ENCODE measurements at regions of chr15 and their contacts with region 1.

Region 1: GRCh38 chr15:31488426-31489204 is 162.0 kb downstream of the KLF13 start:
- DNase-seq: peak in 6 of 9 experiments; percentile 29 to 88 (median 56)
- ATAC-seq: peak; percentile 59
- H3K4me3 ChIP-seq: no peak overlapping the region
- H3K4me3 Mint-ChIP-seq: no peak overlapping the region
- H3K27ac ChIP-seq: no peak overlapping the region
- H3K27ac Mint-ChIP-seq: no peak overlapping the region
- H3K4me1 ChIP-seq: peaks cover 30% of the 10 kb centered on the region
- H3K4me1 Mint-ChIP-seq: peaks cover 39% of the 10 kb centered on the region
- H3K27me3 ChIP-seq: no peaks in the 10 kb centered on the region
- H3K27me3 Mint-ChIP-seq: no peaks in the 10 kb centered on the region
- CTCF ChIP-seq: peak; percentile 88

Region 2: DNA sequence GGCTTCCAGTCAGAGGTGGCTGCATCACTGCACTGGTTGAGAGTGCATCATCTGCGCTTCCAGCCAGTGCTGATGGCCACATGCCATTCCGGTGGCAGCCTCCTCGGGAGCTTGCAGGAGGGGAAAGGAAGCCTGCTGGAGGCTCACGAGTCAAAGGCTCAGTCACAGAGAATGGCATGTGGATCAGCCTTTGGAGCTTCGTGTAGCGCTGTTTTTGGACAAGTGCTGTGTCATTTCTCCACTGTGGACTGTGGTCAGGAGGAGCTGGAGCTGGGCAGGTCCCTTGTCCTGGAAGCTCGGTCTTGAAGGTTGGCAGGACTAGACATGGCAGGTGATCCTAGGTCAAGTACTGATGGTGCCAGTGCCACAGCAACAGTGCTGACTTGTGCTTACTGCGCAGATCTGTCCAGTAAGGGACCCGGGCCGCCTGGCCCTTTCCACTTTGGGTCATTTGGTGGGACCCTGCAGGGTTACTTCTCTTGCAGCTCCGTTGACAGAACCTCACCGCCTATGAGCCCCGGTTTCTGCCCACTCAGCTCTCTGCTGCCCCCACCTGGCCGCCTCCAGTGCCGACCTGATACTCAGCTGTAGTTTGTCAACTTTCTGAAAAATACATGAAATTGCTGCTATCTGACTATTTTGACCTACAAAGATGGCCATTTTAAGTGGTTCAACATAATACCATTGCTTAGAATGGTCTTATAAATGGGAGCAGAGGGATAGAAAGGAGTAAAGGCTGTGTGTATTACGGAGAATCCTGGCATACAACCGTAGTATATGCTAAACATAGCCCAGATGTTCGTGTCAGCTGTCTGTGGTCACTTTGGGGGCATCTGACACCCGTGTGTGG is 359.5 kb before region 1 on chr15:
- CTCF ChIA-PET with region 1: interaction called, 14 read pairs
- POLR2A ChIA-PET with region 1: no interaction called
- intact Hi-C with region 1: no loop called
- DNase-seq: peak; percentile 59 to 89 (median 74)
- ATAC-seq: peak; percentile 92
- H3K4me3 ChIP-seq: no peak overlapping the region
- H3K4me3 Mint-ChIP-seq: no peak overlapping the region
- H3K27ac ChIP-seq: no peak overlapping the region
- H3K27ac Mint-ChIP-seq: no peak overlapping the region
- H3K4me1 ChIP-seq: no peaks in the 10 kb centered on the region
- H3K4me1 Mint-ChIP-seq: peaks cover 5% of the 10 kb centered on the region
- H3K27me3 ChIP-seq: no peaks in the 10 kb centered on the region
- H3K27me3 Mint-ChIP-seq: no peaks in the 10 kb centered on the region
- CTCF ChIP-seq: peak; percentile 86

Region 3: DNA sequence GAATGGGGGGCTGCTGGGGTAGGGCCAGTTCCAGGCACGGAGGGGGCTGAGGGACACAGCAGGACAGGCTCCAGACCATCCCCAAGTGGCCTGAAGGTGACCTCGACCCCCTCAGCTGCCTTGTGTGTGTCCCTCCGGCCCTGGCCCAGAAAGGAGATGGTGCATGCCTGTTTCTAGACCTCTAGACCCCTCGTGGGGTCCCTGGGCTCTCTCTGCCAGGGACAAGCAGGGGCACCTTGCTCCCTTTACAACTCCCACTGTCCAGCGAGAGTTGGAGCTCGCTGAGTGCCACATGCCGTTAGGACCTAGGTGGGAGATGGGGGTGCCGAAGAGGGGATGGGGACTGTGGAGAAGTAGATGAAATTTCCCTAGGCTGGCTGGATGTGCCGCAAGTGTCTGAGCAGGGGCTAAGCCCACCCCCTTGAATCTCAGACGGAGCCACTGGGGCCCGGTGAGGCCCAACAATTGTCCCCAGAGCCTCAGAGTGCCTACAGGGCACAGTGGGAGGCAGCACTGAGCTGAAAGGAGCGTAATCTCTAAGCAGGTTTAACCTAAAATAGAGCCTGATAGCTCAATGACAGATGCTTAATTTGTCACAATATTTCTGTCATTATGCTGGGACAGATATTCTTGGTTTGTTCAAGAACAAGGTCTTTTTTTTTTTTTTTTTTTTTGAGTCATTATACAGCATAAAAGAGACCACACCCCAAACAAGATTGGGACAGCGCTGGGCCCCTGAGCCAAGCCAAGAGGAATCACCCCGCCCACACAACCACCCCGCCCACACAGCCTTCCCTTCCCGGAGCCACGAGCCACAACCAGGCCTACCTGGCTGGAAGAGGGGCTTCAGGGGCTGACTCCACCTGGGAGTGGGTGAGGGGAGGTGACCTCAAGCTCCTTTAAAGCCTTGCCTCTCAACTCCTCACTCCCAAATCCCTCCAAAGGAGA is 185.6 kb before region 1 on chr15:
- CTCF ChIA-PET with region 1: interaction called, 18 read pairs
- POLR2A ChIA-PET with region 1: interaction called, 4 read pairs
- intact Hi-C with region 1: loop called (anchors 1 to 2 kb)
- DNase-seq: peak in 4 of 9 experiments; percentile 13 to 52 (median 45)
- ATAC-seq: peak; percentile 69
- H3K4me3 ChIP-seq: no peak overlapping the region
- H3K4me3 Mint-ChIP-seq: no peak overlapping the region
- H3K27ac ChIP-seq: no peak overlapping the region
- H3K27ac Mint-ChIP-seq: no peak overlapping the region
- H3K4me1 ChIP-seq: peaks cover 26% of the 10 kb centered on the region
- H3K4me1 Mint-ChIP-seq: peaks cover 35% of the 10 kb centered on the region
- H3K27me3 ChIP-seq: peaks cover 0 to 3% of the 10 kb centered on the region in 2 experiments
- H3K27me3 Mint-ChIP-seq: no peaks in the 10 kb centered on the region
- CTCF ChIP-seq: no peak

Region 4: GRCh38 chr15:31338879-31339557 is 149.6 kb before region 1 on chr15:
- CTCF ChIA-PET with region 1: interaction called, 24 read pairs
- POLR2A ChIA-PET with region 1: interaction called, 4 read pairs
- intact Hi-C with region 1: no loop called
- DNase-seq: peak in 2 of 9 experiments; percentile 44 to 63
- ATAC-seq: no peak
- H3K4me3 ChIP-seq: peak overlapping the region in 1 of 2 experiments; percentile 12
- H3K4me3 Mint-ChIP-seq: peak overlapping the region; percentile 45
- H3K27ac ChIP-seq: peak overlapping the region; percentile 36 to 72
- H3K27ac Mint-ChIP-seq: peak overlapping the region; percentile 86
- H3K4me1 ChIP-seq: peaks cover 99% of the 10 kb centered on the region
- H3K4me1 Mint-ChIP-seq: peaks cover 99% of the 10 kb centered on the region
- H3K27me3 ChIP-seq: no peaks in the 10 kb centered on the region
- H3K27me3 Mint-ChIP-seq: no peaks in the 10 kb centered on the region
- CTCF ChIP-seq: no peak

Region 5: DNA sequence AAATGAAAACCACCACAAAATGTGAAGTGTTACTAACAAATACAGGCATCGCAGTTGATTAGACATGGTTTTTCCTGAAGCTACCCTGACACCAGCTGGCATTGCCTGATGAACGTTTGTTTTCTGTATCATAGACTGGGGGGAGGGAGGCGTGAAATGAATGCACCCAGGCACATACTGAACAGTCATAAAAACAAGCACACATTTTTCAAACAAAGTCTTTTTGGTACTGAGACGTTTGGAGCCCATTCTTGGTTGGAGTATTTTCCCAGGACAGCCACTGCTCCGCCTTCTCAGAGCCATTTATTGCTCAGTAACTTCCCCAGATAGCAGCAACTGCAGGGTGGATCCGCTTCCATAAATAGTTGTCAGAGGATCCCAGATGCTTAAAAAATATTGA is 109.6 kb before region 1 on chr15:
- CTCF ChIA-PET with region 1: interaction called, 23 read pairs
- POLR2A ChIA-PET with region 1: interaction called, 4 read pairs
- intact Hi-C with region 1: no loop called
- DNase-seq: peak in 3 of 9 experiments; percentile 36 to 56 (median 40)
- ATAC-seq: peak; percentile 32
- H3K4me3 ChIP-seq: no peak overlapping the region
- H3K4me3 Mint-ChIP-seq: no peak overlapping the region
- H3K27ac ChIP-seq: peak overlapping the region in 1 of 2 experiments; percentile 64
- H3K27ac Mint-ChIP-seq: peak overlapping the region; percentile 93
- H3K4me1 ChIP-seq: peaks cover 49% of the 10 kb centered on the region
- H3K4me1 Mint-ChIP-seq: peaks cover 70% of the 10 kb centered on the region
- H3K27me3 ChIP-seq: no peaks in the 10 kb centered on the region
- H3K27me3 Mint-ChIP-seq: no peaks in the 10 kb centered on the region
- CTCF ChIP-seq: no peak

Region 6: DNA sequence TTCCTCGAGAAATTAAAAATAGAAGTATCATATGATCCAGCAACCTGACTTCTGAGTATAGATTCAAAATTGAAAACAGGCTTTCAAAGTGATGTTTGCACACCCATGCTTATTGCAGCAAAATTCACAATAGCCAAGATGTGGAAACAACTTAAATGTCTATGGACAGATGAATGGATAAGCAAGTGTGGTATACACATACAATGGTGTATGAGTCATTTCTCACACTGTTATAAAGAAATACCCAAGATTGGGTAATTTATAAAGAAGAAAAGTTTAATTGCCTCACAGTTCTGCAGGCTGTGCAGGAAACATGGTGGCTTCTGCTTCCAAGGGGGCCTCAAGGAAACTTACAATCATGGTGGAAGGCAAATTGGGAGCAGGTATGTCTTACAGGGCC is 61.2 kb before region 1 on chr15:
- CTCF ChIA-PET with region 1: interaction called, 12 read pairs
- POLR2A ChIA-PET with region 1: no interaction called
- intact Hi-C with region 1: no loop called
- DNase-seq: no peak
- ATAC-seq: no peak
- H3K4me3 ChIP-seq: no peak overlapping the region
- H3K4me3 Mint-ChIP-seq: no peak overlapping the region
- H3K27ac ChIP-seq: no peak overlapping the region
- H3K27ac Mint-ChIP-seq: no peak overlapping the region
- H3K4me1 ChIP-seq: no peaks in the 10 kb centered on the region
- H3K4me1 Mint-ChIP-seq: peaks cover 16% of the 10 kb centered on the region
- H3K27me3 ChIP-seq: no peaks in the 10 kb centered on the region
- H3K27me3 Mint-ChIP-seq: no peaks in the 10 kb centered on the region
- CTCF ChIP-seq: no peak

Region 7: GRCh38 chr15:31465083-31465955 is 23.3 kb before region 1 on chr15:
- CTCF ChIA-PET with region 1: interaction called, 45 read pairs
- POLR2A ChIA-PET with region 1: no interaction called
- intact Hi-C with region 1: no loop called
- DNase-seq: no peak
- ATAC-seq: no peak
- H3K4me3 ChIP-seq: no peak overlapping the region
- H3K4me3 Mint-ChIP-seq: no peak overlapping the region
- H3K27ac ChIP-seq: no peak overlapping the region
- H3K27ac Mint-ChIP-seq: no peak overlapping the region
- H3K4me1 ChIP-seq: no peaks in the 10 kb centered on the region
- H3K4me1 Mint-ChIP-seq: peaks cover 4% of the 10 kb centered on the region
- H3K27me3 ChIP-seq: no peaks in the 10 kb centered on the region
- H3K27me3 Mint-ChIP-seq: no peaks in the 10 kb centered on the region
- CTCF ChIP-seq: no peak

Region 8: DNA sequence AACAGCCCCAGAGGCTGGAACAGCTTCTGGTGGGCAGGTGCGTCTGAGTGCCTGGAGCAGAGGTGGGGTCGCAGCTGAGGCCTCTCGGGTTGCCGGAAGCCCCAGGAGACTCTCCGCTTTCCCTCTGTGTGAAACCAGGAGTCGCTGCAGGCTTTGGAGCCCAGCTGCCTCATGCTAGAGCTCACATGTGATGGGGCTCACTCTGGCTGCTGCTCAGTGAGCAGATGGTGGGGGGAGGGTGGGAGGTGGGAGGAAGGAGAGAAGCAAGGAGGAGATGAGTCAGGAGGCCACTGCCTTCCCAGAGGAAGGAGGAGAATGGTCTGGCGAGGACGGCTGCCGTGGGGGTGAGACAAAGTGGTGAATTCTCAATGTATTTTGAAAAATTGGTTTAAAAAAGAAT is 251.6 kb after region 1 on chr15:
- CTCF ChIA-PET with region 1: no interaction called
- POLR2A ChIA-PET with region 1: no interaction called
- intact Hi-C with region 1: no loop called
- DNase-seq: no peak
- ATAC-seq: no peak
- H3K4me3 ChIP-seq: no peak overlapping the region
- H3K4me3 Mint-ChIP-seq: no peak overlapping the region
- H3K27ac ChIP-seq: no peak overlapping the region
- H3K27ac Mint-ChIP-seq: no peak overlapping the region
- H3K4me1 ChIP-seq: no peaks in the 10 kb centered on the region
- H3K4me1 Mint-ChIP-seq: no peaks in the 10 kb centered on the region
- H3K27me3 ChIP-seq: no peaks in the 10 kb centered on the region
- H3K27me3 Mint-ChIP-seq: peaks cover 9% of the 10 kb centered on the region
- CTCF ChIP-seq: no peak

Region 9: DNA sequence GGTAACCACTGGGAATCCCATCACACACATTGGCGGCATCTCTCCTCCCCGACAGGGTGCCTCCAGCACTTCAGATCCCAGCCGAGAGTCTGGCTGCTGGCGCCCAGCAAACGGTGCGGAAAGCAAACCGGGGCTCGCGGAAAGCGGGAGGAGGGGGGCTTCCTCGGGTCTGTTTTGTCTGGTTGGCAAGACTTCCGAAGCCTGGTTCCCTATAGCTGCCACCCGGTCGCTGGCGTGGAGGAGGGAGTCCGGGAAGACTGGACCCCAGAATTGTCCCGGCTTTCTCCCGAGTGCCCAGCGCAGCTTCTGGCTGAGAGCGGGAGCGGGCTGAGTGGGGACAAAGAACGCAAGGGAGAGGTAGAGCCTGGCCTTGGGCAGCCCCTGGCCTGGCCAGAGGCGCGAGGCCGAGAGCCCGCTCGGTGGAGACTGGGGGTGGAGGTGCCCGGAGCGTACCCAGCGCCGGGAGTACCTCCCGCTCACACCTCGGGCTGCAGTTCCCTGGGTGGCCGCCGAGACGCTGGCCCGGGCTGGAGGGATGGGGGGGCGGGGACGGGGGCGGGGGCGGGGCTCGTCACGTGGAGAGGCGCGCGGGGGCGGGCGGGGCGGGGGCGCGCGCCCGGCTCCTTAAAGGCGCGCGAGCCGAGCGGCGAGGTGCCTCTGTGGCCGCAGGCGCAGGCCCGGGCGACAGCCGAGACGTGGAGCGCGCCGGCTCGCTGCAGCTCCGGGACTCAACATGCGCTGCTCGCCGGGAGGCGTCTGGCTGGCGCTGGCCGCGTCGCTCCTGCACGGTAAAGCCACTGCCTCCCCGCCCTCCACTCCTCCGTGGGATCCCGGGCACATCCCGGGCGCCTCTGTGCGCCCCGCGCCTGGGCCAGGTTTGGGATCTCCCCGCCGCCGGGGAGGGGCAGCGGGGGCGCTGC is 541.5 kb after region 1 on chr15 and contains the start of gene CHRNA7:
- CTCF ChIA-PET with region 1: no interaction called
- POLR2A ChIA-PET with region 1: no interaction called
- intact Hi-C with region 1: no loop called
- DNase-seq: peak in 2 of 9 experiments; percentile 8 to 11
- ATAC-seq: no peak
- H3K4me3 ChIP-seq: no peak within 1 kb of the TSS
- H3K4me3 Mint-ChIP-seq: peak within 1 kb of the TSS; percentile 30
- H3K27ac ChIP-seq: no peak within 1 kb of the TSS
- H3K27ac Mint-ChIP-seq: no peak within 1 kb of the TSS
- H3K4me1 ChIP-seq: no peaks in the 10 kb centered on the region
- H3K4me1 Mint-ChIP-seq: peaks cover 9% of the 10 kb centered on the region
- H3K27me3 ChIP-seq: peaks cover 10 to 15% of the 10 kb centered on the region in 2 experiments
- H3K27me3 Mint-ChIP-seq: peaks cover 47% of the 10 kb centered on the region
- CTCF ChIP-seq: no peak
- total RNA-seq, gene CHRNA7: not detected

Measured in CD8-positive, alpha-beta T cell (primary cell).